Calu3 (cell line): ENCODE measurements at regions of chr6 and their contacts with region 1.

Region 1: DNA sequence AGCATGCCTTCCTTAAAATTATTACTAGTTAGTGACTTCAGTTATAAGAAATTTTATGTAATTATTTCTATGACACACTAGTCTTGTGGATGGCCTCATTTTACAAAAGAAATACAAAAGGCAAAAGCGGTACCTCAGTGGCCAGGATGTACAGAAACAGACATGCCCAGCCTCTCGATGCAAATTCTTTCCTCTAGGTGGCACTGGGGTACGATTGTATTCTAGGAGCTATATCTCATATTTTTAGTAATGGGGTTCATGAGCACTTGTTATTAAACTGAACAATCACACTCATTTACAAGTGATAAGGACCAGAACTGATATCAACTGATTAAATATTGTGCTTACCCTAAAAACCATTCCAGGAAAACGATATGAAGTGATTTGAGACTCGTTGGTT is 59.8 kb downstream of the SOD2 start:
- DNase-seq: peak; percentile 42
- H3K4me3 Mint-ChIP-seq: no peak overlapping the region
- H3K27ac Mint-ChIP-seq: no peak overlapping the region
- H3K4me1 Mint-ChIP-seq: no peaks in the 10 kb centered on the region
- H3K27me3 Mint-ChIP-seq: peaks cover 7% of the 10 kb centered on the region
- CTCF ChIP-seq: peak; percentile 18

Region 2: GRCh38 chr6:159646733-159647132 is 13.5 kb after region 1 on chr6:
- CTCF ChIA-PET with region 1: interaction called, 10 read pairs
- intact Hi-C with region 1: no loop called
- DNase-seq: peak; percentile 3
- H3K4me3 Mint-ChIP-seq: no peak overlapping the region
- H3K27ac Mint-ChIP-seq: peak overlapping the region; percentile 5
- H3K4me1 Mint-ChIP-seq: peaks cover 30% of the 10 kb centered on the region
- H3K27me3 Mint-ChIP-seq: no peaks in the 10 kb centered on the region
- CTCF ChIP-seq: no peak